CD4-positive, alpha-beta T cell (primary cell): ENCODE measurements at regions of chr7 and their contacts with region 1.

Region 1: DNA sequence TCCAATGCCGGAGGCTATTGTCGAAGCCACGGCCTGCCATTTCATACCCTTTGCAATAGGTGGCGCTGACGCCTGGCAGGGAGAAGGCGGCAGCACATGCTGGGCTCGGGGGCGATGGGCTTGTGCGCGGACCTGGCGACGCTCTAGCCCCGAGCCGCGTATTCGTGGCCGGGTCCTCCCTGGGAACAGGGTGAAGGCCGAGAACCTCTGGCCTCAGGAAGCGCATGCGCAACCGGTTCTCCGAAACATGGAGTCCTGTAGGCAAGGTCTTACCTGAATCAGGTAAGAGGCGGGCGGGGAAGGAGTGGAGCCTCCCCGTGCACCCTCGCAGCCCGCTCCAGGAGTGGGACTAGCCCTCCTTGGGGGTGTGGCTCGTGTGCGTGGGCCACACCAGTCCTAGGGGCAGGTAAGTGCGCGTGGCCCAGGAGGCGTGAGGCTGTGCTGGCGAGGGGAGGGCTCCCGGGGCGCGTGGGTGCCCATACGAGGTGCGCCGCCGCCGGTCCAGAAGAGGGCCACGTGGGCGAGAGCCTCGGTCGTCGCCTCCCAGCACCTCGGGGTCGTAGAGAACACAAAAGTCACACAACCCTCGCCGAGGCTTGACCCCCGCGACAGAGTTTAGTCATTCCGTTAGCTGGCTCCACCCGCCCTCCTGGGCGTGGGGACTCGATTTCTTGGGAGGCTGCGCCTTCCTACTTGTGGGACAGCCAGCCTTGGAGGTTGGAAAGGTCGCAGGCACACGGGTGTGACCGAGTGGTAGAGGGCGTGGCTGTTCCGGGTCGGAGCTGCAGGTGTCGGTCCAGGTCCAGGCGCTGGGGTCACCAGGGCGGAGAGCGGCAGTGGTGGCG is 5.5 kb upstream of the MEST start:
- DNase-seq: peak; percentile 26 to 82 (median 44)
- ATAC-seq: peak; percentile 86
- H3K4me3 ChIP-seq: peak overlapping the region; percentile 72
- H3K4me3 Mint-ChIP-seq: peak overlapping the region; percentile 89
- H3K27ac ChIP-seq: no peak overlapping the region
- H3K27ac Mint-ChIP-seq: no peak overlapping the region
- H3K4me1 ChIP-seq: peaks cover 23% of the 10 kb centered on the region
- H3K4me1 Mint-ChIP-seq: peaks cover 21% of the 10 kb centered on the region
- H3K27me3 ChIP-seq: peaks cover 21 to 23% of the 10 kb centered on the region in 2 experiments
- H3K27me3 Mint-ChIP-seq: peaks cover 67% of the 10 kb centered on the region
- CTCF ChIP-seq: peak; percentile 81

Region 2: DNA sequence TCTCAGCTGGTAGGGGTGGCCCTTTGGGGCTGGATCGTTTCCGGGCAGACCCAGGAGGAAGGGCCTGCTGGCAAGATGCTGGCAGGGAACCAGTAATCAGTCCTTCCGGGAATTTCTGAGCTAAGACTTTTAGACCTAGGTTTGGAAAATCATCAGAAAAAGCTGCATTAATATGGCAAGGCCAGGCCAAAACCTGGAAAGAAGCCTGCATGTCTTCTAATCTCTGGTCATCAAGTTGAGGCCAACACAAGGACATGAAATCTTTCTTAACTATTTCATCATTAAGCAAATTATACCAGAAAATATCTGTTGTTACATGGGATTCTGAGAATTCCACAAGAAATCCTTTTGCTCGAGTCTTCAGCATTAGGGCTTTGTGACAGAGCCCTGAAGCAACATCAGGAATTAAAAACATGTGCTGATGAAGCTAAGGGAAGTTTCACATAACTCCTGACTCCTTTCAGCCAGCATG is 86.2 kb before region 1 on chr7:
- CTCF ChIA-PET with region 1: interaction called, 3 read pairs
- POLR2A ChIA-PET with region 1: no interaction called
- intact Hi-C with region 1: loop called in 1 of 2 experiments (anchors 5 kb)
- DNase-seq: no peak
- ATAC-seq: no peak
- H3K4me3 ChIP-seq: no peak overlapping the region
- H3K4me3 Mint-ChIP-seq: no peak overlapping the region
- H3K27ac ChIP-seq: no peak overlapping the region
- H3K27ac Mint-ChIP-seq: no peak overlapping the region
- H3K4me1 ChIP-seq: no peaks in the 10 kb centered on the region
- H3K4me1 Mint-ChIP-seq: peaks cover 7% of the 10 kb centered on the region
- H3K27me3 ChIP-seq: no peaks in the 10 kb centered on the region
- H3K27me3 Mint-ChIP-seq: no peaks in the 10 kb centered on the region
- CTCF ChIP-seq: no peak

Region 3: GRCh38 chr7:130505753-130506152 is 19.4 kb after region 1 on chr7:
- CTCF ChIA-PET with region 1: no interaction called
- POLR2A ChIA-PET with region 1: no interaction called
- intact Hi-C with region 1: no loop called
- DNase-seq: no peak
- ATAC-seq: no peak
- H3K4me3 ChIP-seq: no peak overlapping the region
- H3K4me3 Mint-ChIP-seq: no peak overlapping the region
- H3K27ac ChIP-seq: no peak overlapping the region
- H3K27ac Mint-ChIP-seq: no peak overlapping the region
- H3K4me1 ChIP-seq: no peaks in the 10 kb centered on the region
- H3K4me1 Mint-ChIP-seq: no peaks in the 10 kb centered on the region
- H3K27me3 ChIP-seq: no peaks in the 10 kb centered on the region
- H3K27me3 Mint-ChIP-seq: no peaks in the 10 kb centered on the region
- CTCF ChIP-seq: no peak

Region 4: GRCh38 chr7:130758429-130759056 is 272.2 kb after region 1 on chr7:
- CTCF ChIA-PET with region 1: no interaction called
- POLR2A ChIA-PET with region 1: no interaction called
- intact Hi-C with region 1: loop called in 1 of 2 experiments (anchors 10 kb)
- DNase-seq: peak in 3 of 14 experiments; percentile 49 to 71 (median 67)
- ATAC-seq: peak; percentile 48
- H3K4me3 ChIP-seq: no peak overlapping the region
- H3K4me3 Mint-ChIP-seq: no peak overlapping the region
- H3K27ac ChIP-seq: no peak overlapping the region
- H3K27ac Mint-ChIP-seq: no peak overlapping the region
- H3K4me1 ChIP-seq: no peaks in the 10 kb centered on the region
- H3K4me1 Mint-ChIP-seq: no peaks in the 10 kb centered on the region
- H3K27me3 ChIP-seq: no peaks in the 10 kb centered on the region
- H3K27me3 Mint-ChIP-seq: peaks cover 7% of the 10 kb centered on the region
- CTCF ChIP-seq: peak; percentile 92